ENCODE measurements at regions of chr6 and their contacts with region 1.

Region 1: DNA sequence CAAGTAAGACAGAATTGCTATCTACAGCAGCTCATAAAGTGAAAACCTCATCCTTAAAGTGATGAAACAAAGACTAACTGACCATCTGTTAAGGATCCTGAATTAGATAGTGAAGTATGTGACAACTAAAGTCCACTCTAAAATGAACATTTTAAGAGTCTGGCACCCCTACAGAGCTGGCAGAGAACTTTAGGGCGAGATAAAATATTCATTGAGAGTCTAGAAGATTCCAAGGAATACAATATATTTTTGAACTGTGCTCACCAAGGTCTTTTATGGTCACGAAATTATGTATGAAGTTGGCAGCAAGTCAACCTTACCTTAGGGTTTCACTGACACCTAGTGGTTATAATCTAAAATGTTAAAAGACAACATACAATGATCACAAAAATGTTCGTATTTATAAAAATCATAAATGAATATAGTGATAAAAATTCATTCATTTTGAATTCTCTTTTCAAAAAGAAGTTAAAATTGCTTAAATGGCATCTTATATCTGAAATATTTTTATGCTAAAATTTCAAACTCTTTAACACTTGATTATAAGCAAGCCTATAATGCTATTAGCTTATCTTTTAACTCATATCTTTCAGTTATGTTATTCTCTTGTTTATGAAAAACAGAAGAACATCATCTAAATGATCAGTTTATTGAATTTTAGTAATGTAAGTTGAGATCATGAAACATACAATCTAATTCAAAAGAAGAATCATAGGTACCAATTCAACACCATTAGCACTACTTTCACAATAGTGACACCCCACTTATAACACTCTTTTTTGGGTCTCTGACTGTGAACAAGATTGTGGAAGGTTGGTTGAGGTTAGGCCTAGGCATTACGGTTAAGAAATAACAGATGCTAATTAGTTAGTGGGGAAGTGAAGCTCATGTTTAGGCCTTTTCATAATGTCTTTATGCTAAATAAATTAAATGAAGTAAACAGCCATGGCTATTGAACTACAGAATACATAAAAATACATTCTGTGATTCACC is 27.5 kb downstream of the RSPH3 start:
- DNase-seq: peak; percentile 77
- ATAC-seq: no peak
- H3K4me3 ChIP-seq: no peak overlapping the region
- H3K4me3 Mint-ChIP-seq: no peak overlapping the region
- H3K27ac ChIP-seq: no peak overlapping the region
- H3K27ac Mint-ChIP-seq: no peak overlapping the region
- H3K4me1 ChIP-seq: peaks cover 0 to 4% of the 10 kb centered on the region in 2 donors
- H3K4me1 Mint-ChIP-seq: peaks cover 6% of the 10 kb centered on the region
- H3K27me3 ChIP-seq: no peaks in the 10 kb centered on the region
- H3K27me3 Mint-ChIP-seq: no peaks in the 10 kb centered on the region
- CTCF ChIP-seq: peak; percentile 90

Region 2: DNA sequence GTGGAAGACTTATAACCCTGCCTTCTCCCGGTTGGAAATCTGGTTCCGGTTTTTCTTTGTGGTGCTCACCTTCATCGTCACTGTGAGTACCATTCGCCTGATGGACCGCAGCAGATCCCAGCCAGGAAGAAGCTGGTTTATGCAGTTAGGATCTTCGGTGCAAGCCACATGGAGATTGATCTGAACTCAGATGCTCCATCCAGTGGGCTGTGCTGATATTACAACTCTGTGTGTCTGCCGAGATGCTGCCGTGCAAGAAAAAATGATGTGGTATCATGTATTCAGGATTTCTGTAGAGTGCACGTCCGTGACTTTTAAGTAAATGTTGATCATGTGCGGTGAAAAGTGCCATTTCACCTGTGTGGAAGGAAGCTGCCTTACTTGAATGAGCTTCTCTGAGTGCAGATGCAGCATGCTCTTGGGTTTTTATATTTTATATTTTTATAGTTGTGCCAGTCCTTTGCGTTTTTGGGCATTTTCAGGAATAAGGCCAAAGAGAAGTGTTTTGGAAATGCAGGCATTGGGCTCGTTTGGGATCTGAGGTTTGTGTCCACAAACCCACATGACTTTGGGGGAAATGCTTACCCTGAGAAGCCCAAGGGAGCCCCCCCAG is 367.2 kb before region 1 on chr6:
- CTCF ChIA-PET with region 1: interaction called, 10 read pairs
- POLR2A ChIA-PET with region 1: no interaction called
- intact Hi-C with region 1: no loop called
- DNase-seq: peak; percentile 68
- ATAC-seq: peak; percentile 49
- H3K4me3 ChIP-seq: no peak overlapping the region
- H3K4me3 Mint-ChIP-seq: no peak overlapping the region
- H3K27ac ChIP-seq: no peak overlapping the region
- H3K27ac Mint-ChIP-seq: no peak overlapping the region
- H3K4me1 ChIP-seq: no peaks in the 10 kb centered on the region
- H3K4me1 Mint-ChIP-seq: no peaks in the 10 kb centered on the region
- H3K27me3 ChIP-seq: no peaks in the 10 kb centered on the region
- H3K27me3 Mint-ChIP-seq: no peaks in the 10 kb centered on the region
- CTCF ChIP-seq: peak; percentile 79

Region 3: DNA sequence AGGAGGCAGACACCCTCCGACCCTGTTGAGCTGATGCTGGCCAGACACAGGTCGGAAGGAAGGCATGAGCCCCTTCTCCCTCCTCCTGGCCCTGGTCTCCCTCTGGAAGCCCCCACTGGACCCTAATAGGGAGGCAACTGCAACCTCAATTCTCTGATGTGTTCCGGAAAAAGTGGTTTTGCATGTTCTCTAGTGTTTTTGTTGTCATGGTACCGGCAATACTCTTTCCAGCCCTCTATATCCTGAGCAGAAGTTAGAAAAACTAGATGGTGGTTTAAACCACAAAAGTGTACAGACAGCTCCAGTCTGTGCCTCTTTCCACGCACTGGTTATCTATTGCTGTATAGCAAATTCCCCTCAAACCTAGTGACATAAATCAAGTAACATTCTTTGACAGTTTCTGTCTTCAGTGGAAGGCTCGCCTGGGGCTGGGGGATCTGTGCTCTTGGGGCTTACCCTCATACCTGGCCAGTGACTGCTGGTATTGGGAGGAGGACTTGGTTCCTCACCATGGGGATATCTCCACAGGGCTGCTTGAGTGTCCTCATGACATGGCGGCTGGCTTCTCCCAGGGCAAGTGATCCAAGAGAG is 285.7 kb before region 1 on chr6:
- CTCF ChIA-PET with region 1: interaction called, 33 read pairs
- POLR2A ChIA-PET with region 1: no interaction called
- intact Hi-C with region 1: no loop called
- DNase-seq: peak; percentile 76
- ATAC-seq: peak; percentile 75
- H3K4me3 ChIP-seq: no peak overlapping the region
- H3K4me3 Mint-ChIP-seq: peak overlapping the region; percentile 41
- H3K27ac ChIP-seq: peak overlapping the region; percentile 30 to 53
- H3K27ac Mint-ChIP-seq: peak overlapping the region; percentile 50
- H3K4me1 ChIP-seq: peaks cover 17 to 18% of the 10 kb centered on the region in 2 donors
- H3K4me1 Mint-ChIP-seq: peaks cover 25% of the 10 kb centered on the region
- H3K27me3 ChIP-seq: no peaks in the 10 kb centered on the region
- H3K27me3 Mint-ChIP-seq: no peaks in the 10 kb centered on the region
- CTCF ChIP-seq: no peak

Region 4: DNA sequence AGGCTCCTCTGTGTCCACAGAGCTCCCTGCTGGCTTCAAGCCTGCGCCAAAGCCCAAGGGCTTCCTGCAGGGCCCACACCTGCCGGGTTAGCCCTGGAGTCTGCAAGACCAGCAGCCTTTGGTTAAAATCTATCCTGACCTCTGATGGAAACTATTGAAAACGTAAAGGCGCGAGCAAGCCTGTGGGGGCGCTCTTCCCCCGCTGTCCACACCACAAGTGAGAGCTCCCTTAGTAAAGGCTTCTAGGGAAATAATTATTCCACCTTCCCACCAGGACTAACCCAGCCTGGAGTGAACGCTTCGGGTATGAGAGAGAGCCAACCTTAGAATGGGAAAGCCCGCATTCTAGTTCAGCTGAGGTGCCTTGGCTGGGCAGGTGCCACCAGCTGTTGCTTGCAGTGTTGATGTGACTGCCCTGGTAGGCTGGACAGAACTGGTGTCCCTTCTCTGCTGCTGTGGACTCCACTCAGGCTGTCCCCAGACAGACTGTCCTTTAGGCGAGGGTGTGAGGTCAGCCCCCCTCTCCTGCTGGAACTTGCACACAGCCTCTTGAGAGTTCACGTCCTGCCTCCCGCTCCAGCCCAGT is 254.0 kb before region 1 on chr6:
- CTCF ChIA-PET with region 1: interaction called, 16 read pairs
- POLR2A ChIA-PET with region 1: no interaction called
- intact Hi-C with region 1: no loop called
- DNase-seq: no peak
- ATAC-seq: no peak
- H3K4me3 ChIP-seq: no peak overlapping the region
- H3K4me3 Mint-ChIP-seq: peak overlapping the region; percentile 16
- H3K27ac ChIP-seq: peak overlapping the region; percentile 86 to 90
- H3K27ac Mint-ChIP-seq: peak overlapping the region; percentile 96
- H3K4me1 ChIP-seq: peaks cover 54 to 71% of the 10 kb centered on the region in 2 donors
- H3K4me1 Mint-ChIP-seq: peaks cover 64% of the 10 kb centered on the region
- H3K27me3 ChIP-seq: no peaks in the 10 kb centered on the region
- H3K27me3 Mint-ChIP-seq: no peaks in the 10 kb centered on the region
- CTCF ChIP-seq: no peak

Region 5: GRCh38 chr6:158780988-158781708 is 191.4 kb before region 1 on chr6:
- CTCF ChIA-PET with region 1: interaction called, 19 read pairs
- POLR2A ChIA-PET with region 1: no interaction called
- intact Hi-C with region 1: no loop called
- DNase-seq: no peak
- ATAC-seq: no peak
- H3K4me3 ChIP-seq: no peak overlapping the region
- H3K4me3 Mint-ChIP-seq: no peak overlapping the region
- H3K27ac ChIP-seq: peak overlapping the region in 1 of 2 donors; percentile 3
- H3K27ac Mint-ChIP-seq: peak overlapping the region; percentile 32
- H3K4me1 ChIP-seq: no peaks in the 10 kb centered on the region
- H3K4me1 Mint-ChIP-seq: peaks cover 17% of the 10 kb centered on the region
- H3K27me3 ChIP-seq: no peaks in the 10 kb centered on the region
- H3K27me3 Mint-ChIP-seq: no peaks in the 10 kb centered on the region
- CTCF ChIP-seq: no peak

Region 6: DNA sequence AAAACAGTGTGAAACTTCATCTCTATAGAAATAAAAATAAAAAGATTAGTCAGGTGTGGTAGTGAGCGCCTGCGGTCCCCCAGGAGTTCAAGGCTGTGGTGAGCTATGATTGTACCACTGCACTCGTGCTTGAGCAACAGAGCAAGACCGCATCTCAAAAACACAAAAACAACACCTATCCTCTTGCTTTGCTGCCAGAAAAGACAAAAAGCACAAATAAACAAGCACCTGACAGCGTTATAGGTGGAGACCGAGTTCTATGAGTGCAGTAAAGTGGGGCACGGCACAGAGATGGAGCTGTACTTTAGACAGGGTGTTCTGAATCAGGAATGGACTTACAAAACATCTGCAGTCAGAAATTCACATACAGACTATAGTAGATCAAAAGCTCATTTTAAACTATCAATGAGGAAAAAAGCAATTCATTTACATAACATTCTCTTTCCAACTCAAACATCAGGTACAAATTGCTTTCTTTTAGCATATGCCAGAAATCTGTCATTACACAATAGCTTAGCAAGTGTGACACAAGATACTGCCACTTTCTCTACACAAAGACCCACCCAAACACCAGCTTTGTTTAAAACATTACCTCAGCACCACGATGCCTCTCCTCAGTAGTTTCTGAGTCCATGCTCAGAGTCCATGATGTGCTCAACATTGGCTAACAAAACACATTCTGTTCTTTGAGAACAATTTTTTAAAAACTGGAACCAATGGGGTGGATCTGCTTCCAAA is 163.4 kb before region 1 on chr6:
- CTCF ChIA-PET with region 1: interaction called, 25 read pairs
- POLR2A ChIA-PET with region 1: no interaction called
- intact Hi-C with region 1: loop called (anchors 1 kb)
- DNase-seq: peak; percentile 89
- ATAC-seq: peak; percentile 80
- H3K4me3 ChIP-seq: peak overlapping the region in 3 of 5 experiments; percentile 12 to 50 (median 15)
- H3K4me3 Mint-ChIP-seq: peak overlapping the region; percentile 85
- H3K27ac ChIP-seq: peak overlapping the region; percentile 94 to 96
- H3K27ac Mint-ChIP-seq: peak overlapping the region; percentile 96
- H3K4me1 ChIP-seq: peaks cover 97 to 98% of the 10 kb centered on the region in 2 donors
- H3K4me1 Mint-ChIP-seq: peaks cover 96% of the 10 kb centered on the region
- H3K27me3 ChIP-seq: no peaks in the 10 kb centered on the region
- H3K27me3 Mint-ChIP-seq: no peaks in the 10 kb centered on the region
- CTCF ChIP-seq: no peak

Region 7: DNA sequence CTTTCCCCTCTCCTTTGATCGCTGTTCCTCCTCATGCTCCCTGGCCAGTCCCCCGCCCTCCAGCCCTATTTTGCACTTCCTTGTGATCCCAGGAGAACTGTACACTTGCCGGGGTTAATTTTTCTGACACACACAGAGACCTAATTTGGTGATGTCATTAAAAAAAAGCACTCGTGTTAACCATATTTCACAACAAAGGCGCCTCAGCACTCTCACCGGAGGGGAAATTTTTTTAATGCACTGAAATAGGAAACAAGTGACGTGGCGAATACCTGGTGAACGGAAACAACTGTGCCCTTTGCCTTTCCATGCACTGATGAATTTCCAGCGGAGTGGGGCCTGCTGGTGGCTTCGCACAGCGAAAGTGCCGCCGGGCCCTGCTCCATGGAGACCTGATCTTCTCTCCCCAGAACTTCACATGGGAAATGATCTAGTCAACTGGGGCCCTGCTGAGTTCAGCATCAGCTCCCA is 126.1 kb after region 1 on chr6:
- CTCF ChIA-PET with region 1: no interaction called
- POLR2A ChIA-PET with region 1: no interaction called
- intact Hi-C with region 1: no loop called
- DNase-seq: peak; percentile 93
- ATAC-seq: peak; percentile 44
- H3K4me3 ChIP-seq: peak overlapping the region in 3 of 5 experiments; percentile 5 to 38 (median 13)
- H3K4me3 Mint-ChIP-seq: peak overlapping the region; percentile 77
- H3K27ac ChIP-seq: peak overlapping the region; percentile 95 to 98
- H3K27ac Mint-ChIP-seq: peak overlapping the region; percentile 93
- H3K4me1 ChIP-seq: peaks cover 77 to 88% of the 10 kb centered on the region in 2 donors
- H3K4me1 Mint-ChIP-seq: peaks cover 92% of the 10 kb centered on the region
- H3K27me3 ChIP-seq: no peaks in the 10 kb centered on the region
- H3K27me3 Mint-ChIP-seq: no peaks in the 10 kb centered on the region
- CTCF ChIP-seq: no peak